Left lung (tissue), 14 donors: ENCODE measurements at regions of chr6 and their contacts with region 1.

Region 1: DNA sequence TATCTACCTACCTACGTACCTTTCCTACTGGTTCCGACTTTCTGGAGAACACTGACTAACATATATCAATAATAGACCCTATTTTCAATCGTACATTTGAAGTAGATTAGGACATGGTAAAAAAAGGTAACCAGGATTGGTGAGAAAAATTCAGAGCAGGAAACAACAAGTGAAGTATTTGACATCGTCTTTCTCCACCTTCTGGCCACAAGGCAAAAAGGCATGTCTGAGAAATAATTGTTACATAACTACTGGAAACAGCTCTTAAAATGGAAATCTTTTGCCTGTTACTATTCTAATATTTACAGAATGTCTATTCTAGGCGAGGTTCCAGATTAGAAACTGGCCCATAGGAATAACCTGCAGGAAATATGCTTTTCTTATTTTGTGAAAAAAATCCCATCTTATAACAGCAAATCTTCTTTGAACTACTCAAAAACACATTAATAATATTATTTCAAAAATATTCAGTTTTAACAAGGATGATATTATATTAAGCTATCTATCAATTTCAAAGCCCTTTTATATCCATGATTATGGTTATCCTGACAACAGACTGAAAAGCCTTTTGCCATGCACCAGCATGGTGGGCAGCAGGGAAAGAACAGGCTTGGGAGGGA is 80.8 kb downstream of the RCAN2 start:
- DNase-seq: peak in 2 of 4 donors; percentile 29 to 79
- ATAC-seq: peak; percentile 85
- H3K4me3 ChIP-seq: no peak overlapping the region
- H3K27ac ChIP-seq: no peak overlapping the region
- H3K4me1 ChIP-seq: peaks cover 0 to 4% of the 10 kb centered on the region in 2 donors
- H3K27me3 ChIP-seq: no peaks in the 10 kb centered on the region
- CTCF ChIP-seq: peak; percentile 71 to 75

Region 2: DNA sequence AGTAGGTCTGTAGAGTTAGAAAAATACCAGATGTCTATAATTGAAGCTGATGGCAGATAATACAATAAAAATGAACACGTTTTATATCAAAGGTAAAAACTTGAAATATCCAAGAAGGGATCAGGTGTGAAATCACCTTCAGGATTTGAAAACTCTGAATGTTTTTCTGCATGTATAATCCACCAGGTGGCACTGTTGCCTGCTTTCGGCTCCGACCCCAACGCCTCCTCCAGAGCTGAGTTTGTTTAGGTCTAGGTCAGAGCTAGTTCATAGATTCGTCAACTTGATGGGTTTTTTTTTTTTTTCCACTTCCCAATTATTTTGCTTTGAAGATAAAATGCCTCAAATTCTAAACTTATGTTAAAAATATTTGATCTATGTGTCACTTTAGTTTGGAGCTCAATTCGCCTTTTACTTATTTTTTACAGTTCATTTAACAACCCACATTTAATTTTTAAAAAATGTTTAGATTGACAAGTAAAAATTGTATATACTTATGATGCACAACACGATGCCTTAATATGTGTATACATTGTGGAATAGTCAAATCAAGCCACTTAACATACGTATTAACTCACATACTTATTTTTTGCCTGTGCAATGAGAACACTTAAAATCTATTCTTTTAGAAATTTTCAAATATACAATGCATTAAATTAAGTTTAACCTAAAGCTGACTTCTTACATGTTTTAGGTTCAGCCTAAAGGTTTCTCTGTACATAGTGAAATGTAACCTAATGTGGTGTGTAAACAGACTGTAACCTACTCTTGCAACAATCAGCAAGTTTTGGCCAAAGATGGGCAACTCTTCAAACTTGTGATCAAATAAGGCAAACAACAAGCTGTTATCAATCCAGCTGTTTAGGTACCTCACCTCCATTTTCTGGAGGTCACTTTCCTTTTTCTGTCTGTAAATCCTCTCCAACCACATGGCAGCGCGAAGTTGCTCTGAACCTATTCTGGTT is 320.0 kb before region 1 on chr6:
- intact Hi-C with region 1: loop called in 1 of 2 experiments (anchors 5 kb)
- DNase-seq: peak; percentile 39 to 73 (median 59)
- ATAC-seq: peak; percentile 94
- H3K4me3 ChIP-seq: no peak overlapping the region
- H3K27ac ChIP-seq: no peak overlapping the region
- H3K4me1 ChIP-seq: no peaks in the 10 kb centered on the region
- H3K27me3 ChIP-seq: no peaks in the 10 kb centered on the region
- CTCF ChIP-seq: peak; percentile 70 to 74

Region 3: GRCh38 chr6:46221222-46221793 is 189.1 kb before region 1 on chr6:
- intact Hi-C with region 1: loop called in 1 of 2 experiments (anchors 10 kb)
- DNase-seq: peak in 1 of 4 donors; percentile 65
- ATAC-seq: peak; percentile 86
- H3K4me3 ChIP-seq: no peak overlapping the region
- H3K27ac ChIP-seq: no peak overlapping the region
- H3K4me1 ChIP-seq: no peaks in the 10 kb centered on the region
- H3K27me3 ChIP-seq: no peaks in the 10 kb centered on the region
- CTCF ChIP-seq: peak; percentile 52 to 71

Region 4: GRCh38 chr6:46269447-46270229 is 140.8 kb before region 1 on chr6:
- intact Hi-C with region 1: no loop called
- DNase-seq: peak in 1 of 4 donors; percentile 32
- ATAC-seq: no peak
- H3K4me3 ChIP-seq: no peak overlapping the region
- H3K27ac ChIP-seq: no peak overlapping the region
- H3K4me1 ChIP-seq: no peaks in the 10 kb centered on the region
- H3K27me3 ChIP-seq: no peaks in the 10 kb centered on the region
- CTCF ChIP-seq: no peak

Region 5: GRCh38 chr6:47203266-47203937 is 793.0 kb after region 1 on chr6:
- intact Hi-C with region 1: no loop called
- DNase-seq: no peak
- ATAC-seq: no peak
- H3K4me3 ChIP-seq: no peak overlapping the region
- H3K27ac ChIP-seq: no peak overlapping the region
- H3K4me1 ChIP-seq: no peaks in the 10 kb centered on the region
- H3K27me3 ChIP-seq: no peaks in the 10 kb centered on the region
- CTCF ChIP-seq: no peak